ENCODE measurements at regions of chr20 and their contacts with region 1.

Region 1: GRCh38 chr20:36645998-36646397 is at the start of gene SLA2:
- DNase-seq: peak; percentile 61
- H3K4me3 Mint-ChIP-seq: peak within 1 kb of the TSS; percentile 98
- H3K27ac Mint-ChIP-seq: peak within 1 kb of the TSS; percentile 99
- H3K4me1 Mint-ChIP-seq: peaks cover 48% of the 10 kb centered on the region
- H3K27me3 Mint-ChIP-seq: no peaks in the 10 kb centered on the region
- total RNA-seq, gene SLA2: 62.0 and 64.0 TPM in 2 replicates

Region 2: DNA sequence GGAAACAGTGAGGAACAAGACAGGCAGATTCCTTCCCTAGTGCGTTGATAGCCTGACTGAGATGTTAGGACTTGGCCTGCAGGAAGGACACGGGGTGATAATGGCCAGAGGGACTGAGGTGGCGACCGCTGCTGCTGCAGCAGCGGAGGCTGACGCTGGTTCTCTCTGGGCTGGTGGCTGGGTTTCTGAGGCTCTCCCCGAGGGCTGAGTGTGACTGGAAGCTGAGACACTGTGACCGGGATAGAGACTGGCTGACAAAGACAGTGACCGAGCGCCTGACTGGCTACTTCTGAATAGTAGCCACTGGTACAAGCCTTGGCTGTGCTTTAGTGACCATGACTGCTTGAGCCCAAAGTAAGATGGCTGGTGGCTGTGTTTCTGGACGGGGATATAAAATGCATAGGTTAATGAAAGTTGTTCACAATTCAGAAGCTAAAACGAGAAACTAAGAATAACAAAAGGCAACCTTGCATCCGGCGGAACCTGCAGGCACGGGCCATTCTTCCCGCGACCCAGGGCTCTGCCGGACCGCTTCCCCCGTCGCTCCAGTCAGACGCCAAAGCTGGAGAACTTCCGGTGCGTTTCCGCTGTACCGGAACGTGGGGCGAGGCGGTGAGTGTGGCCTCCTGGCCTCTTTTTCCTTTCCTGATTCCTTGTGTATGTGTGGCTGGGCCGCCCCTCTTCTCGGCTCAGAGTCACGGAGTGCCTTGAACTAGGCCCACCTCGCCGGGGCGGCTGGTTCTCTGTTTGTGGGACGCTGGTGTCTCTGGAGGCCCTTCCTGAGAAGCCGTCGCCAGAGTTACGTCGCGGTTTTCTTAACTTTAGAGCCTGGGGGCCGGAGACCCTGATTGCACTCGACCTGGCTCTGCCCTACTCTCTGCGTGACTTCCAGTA is 409.9 kb before region 1 on chr20 and contains the start of gene AAR2:
- intact Hi-C with region 1: no loop called
- DNase-seq: peak; percentile 76
- H3K4me3 Mint-ChIP-seq: peak within 1 kb of the TSS; percentile 88
- H3K27ac Mint-ChIP-seq: peak within 1 kb of the TSS; percentile 91
- H3K4me1 Mint-ChIP-seq: peaks cover 30% of the 10 kb centered on the region
- H3K27me3 Mint-ChIP-seq: no peaks in the 10 kb centered on the region
- total RNA-seq, gene AAR2: 33.3 and 36.7 TPM in 2 replicates

Region 3: DNA sequence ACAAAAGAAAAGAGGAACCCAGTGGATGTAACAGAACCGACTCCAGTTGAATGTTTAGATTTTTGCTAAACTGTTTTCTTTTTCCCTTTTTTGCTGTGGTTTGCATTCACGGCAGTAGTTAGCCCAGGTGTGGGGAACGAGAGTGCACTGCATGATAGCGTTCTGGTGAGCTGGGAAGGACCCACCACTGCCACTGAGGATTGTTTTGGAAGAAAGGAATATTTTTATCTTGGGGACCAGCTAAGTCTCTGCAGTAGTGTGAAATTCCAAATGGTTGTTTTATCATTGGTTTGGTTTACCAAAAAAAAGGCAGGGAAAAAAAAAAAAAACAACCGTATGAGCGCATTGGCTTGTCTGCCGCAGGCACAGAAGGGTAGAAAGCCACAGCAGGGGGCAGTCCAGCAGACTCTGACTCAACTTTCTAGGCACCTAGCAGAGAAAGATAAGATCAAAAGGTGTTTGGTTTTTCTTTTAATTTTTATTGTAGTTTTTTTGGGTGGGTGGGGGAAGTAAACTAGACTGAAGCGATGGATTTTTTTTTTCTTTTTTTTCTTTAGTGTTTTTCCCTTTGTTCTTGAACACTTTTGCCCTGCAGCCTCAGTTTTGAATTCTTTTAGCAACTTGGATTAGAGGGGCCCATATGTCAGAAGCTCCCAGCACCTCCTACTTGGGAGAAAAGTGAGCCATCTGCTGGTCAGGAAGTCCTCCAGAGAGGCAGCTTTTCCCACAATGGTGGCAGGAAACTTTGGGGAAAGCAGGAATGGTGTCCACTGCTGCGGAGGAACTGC is 54.0 kb before region 1 on chr20:
- intact Hi-C with region 1: loop called (anchors 1 kb)
- DNase-seq: peak; percentile 36
- H3K4me3 Mint-ChIP-seq: peak overlapping the region; percentile 27
- H3K27ac Mint-ChIP-seq: peak overlapping the region; percentile 77
- H3K4me1 Mint-ChIP-seq: peaks cover 62% of the 10 kb centered on the region
- H3K27me3 Mint-ChIP-seq: no peaks in the 10 kb centered on the region

Region 4: GRCh38 chr20:36613974-36614373 is 32.0 kb before region 1 on chr20:
- intact Hi-C with region 1: loop called (anchors 2 kb)
- DNase-seq: no peak
- H3K4me3 Mint-ChIP-seq: no peak overlapping the region
- H3K27ac Mint-ChIP-seq: peak overlapping the region; percentile 52
- H3K4me1 Mint-ChIP-seq: peaks cover 15% of the 10 kb centered on the region
- H3K27me3 Mint-ChIP-seq: no peaks in the 10 kb centered on the region

Region 5: DNA sequence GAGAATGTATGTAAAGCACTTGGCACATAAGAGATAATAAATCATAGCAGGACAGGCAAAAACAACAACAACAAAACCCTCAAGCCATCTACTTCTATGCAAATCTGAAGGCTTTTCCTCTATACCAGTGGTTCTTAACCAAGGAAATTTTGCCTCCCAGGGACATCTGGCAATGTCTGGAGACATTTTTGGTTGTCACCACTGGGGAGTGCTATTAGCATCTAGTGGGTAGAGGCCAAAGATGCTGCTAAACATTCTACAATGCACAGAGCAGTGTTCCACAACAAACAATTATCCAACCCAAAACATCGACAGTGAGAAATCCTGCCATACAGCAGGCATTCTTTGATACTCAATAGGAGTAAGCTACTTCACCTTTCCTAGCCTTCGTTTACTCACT is 71.7 kb after region 1 on chr20:
- intact Hi-C with region 1: loop called (anchors 5 kb)
- DNase-seq: no peak
- H3K4me3 Mint-ChIP-seq: no peak overlapping the region
- H3K27ac Mint-ChIP-seq: no peak overlapping the region
- H3K4me1 Mint-ChIP-seq: peaks cover 14% of the 10 kb centered on the region
- H3K27me3 Mint-ChIP-seq: peaks cover 1% of the 10 kb centered on the region

Region 6: DNA sequence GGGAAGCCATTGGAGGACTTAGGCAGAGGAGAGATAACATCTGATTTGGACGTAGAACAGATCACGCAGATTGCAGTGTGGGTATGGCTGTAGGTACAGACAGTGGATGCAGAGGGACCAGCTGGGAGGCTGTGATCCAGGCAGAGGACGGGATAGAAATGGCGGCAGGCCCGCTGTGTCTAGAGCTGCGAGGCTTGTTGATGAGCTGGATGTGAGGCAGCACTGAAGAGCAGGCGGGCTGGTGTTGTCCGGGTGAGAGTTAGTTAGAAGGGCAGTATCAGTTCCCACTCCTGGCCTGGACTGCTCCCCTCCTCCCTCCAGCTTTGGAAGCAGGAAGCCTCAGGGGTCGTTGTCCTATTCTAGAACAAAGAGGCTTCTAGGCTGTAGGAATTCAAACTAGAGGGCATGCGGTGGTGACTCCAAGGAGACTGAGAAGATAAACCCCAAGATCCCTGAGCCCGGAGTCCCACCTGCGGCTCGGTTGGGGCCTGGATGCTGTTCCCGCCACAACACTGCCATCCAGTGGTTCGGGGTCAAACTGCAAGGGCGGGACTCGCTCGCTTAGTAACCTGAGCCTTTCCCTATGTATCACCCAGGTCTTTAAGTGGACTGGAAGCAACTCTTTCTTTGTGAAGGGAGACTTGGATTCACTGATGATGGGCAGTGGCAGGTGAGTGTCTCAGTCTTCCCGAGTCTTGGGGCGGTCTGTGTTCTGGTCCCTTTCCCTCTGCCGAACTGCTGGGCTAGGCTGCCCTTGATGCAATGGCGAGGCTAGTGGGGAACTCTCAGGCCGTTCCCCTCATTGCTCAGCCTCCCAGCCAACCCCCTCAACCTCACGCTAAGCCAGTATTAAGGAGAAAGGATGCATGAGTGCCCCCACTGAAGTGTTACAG is 241.1 kb after region 1 on chr20:
- intact Hi-C with region 1: loop called (anchors 10 kb)
- DNase-seq: peak; percentile 65
- H3K4me3 Mint-ChIP-seq: no peak overlapping the region
- H3K27ac Mint-ChIP-seq: peak overlapping the region; percentile 0
- H3K4me1 Mint-ChIP-seq: peaks cover 17% of the 10 kb centered on the region
- H3K27me3 Mint-ChIP-seq: no peaks in the 10 kb centered on the region

Region 7: GRCh38 chr20:36904690-36905089 is 258.7 kb after region 1 on chr20:
- intact Hi-C with region 1: no loop called
- DNase-seq: no peak
- H3K4me3 Mint-ChIP-seq: no peak overlapping the region
- H3K27ac Mint-ChIP-seq: peak overlapping the region; percentile 76
- H3K4me1 Mint-ChIP-seq: peaks cover 10% of the 10 kb centered on the region
- H3K27me3 Mint-ChIP-seq: no peaks in the 10 kb centered on the region

Measured in activated T-helper 1 cell treated with anti-CD3 and anti-CD28 coated beads, Interleukin-12 subunit alpha, Interleukin-12 subunit beta, Interleukin-2, Interleukin-4 antibody, amounts not matched to agents 30 ng/mL and 10 ng/mL and 1 ng/mL, durations not matched to agents 14 hours and 24 hours and 36 hours (primary cell).